CD8-positive, alpha-beta T cell (primary cell): ENCODE measurements at regions of chr7 and their contacts with region 1.

Region 1: DNA sequence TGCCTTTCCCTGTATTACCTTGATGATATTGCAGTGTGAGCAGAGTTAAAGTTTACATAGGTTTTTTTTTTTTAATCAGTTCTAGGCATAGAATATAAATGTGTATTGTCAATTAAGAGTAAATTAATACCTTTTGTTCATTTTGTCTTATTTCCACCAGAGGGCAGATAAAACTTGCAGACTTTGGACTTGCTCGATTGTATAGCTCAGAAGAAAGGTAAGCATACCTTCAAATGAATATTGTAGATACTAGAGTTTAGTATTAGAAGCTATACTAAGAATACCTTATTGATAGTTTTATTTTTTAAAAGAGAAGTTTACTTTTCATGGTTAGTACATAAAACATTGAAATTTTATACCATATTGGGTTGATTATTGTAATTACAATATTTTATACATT is 86.8 kb downstream of the MPLKIP start:
- DNase-seq: peak in 1 of 9 experiments; percentile 8
- ATAC-seq: no peak
- H3K4me3 ChIP-seq: no peak overlapping the region
- H3K4me3 Mint-ChIP-seq: no peak overlapping the region
- H3K27ac ChIP-seq: no peak overlapping the region
- H3K27ac Mint-ChIP-seq: no peak overlapping the region
- H3K4me1 ChIP-seq: no peaks in the 10 kb centered on the region
- H3K4me1 Mint-ChIP-seq: peaks cover 6% of the 10 kb centered on the region
- H3K27me3 ChIP-seq: no peaks in the 10 kb centered on the region
- H3K27me3 Mint-ChIP-seq: no peaks in the 10 kb centered on the region
- CTCF ChIP-seq: no peak

Region 2: DNA sequence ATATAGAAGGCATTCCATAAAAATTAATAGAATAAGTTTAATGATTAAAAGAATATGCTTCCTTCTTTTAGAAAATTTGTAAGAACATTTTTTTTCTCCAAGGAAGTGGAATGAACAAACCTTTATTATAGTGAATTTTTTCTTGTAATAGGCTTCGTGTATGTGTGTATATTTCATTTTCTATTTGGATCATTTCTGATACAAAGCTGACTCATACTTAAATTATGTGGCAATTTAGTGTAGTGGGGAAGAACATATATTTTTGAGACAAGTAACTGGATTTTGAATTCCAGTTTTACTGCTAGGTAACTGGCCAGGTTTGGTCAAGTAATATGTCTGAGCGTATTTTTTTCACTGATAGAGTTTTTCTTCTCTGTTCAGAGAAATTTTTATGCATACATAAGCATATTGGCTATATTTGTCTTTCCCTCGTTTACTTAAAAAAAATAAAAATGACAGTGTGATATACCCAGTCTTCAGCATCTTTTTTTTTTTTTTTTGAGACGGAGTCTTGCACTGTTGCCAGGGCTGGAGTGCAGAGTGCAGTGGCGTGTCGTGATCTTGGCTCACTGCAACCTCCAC is 46.8 kb before region 1 on chr7:
- CTCF ChIA-PET with region 1: no interaction called
- POLR2A ChIA-PET with region 1: no interaction called
- intact Hi-C with region 1: loop called in 1 of 2 experiments (anchors 5 kb)
- DNase-seq: no peak
- ATAC-seq: no peak
- H3K4me3 ChIP-seq: no peak overlapping the region
- H3K4me3 Mint-ChIP-seq: no peak overlapping the region
- H3K27ac ChIP-seq: no peak overlapping the region
- H3K27ac Mint-ChIP-seq: no peak overlapping the region
- H3K4me1 ChIP-seq: no peaks in the 10 kb centered on the region
- H3K4me1 Mint-ChIP-seq: peaks cover 9% of the 10 kb centered on the region
- H3K27me3 ChIP-seq: no peaks in the 10 kb centered on the region
- H3K27me3 Mint-ChIP-seq: no peaks in the 10 kb centered on the region
- CTCF ChIP-seq: no peak